Head of caudate nucleus (tissue), 42 donors: ENCODE measurements at regions of chr3 and their contacts with region 1.

Region 1: GRCh38 chr3:142595951-142596725 is at the start of gene PLS1:
- DNase-seq: peak; percentile 45 to 91 (median 82)

Region 2: DNA sequence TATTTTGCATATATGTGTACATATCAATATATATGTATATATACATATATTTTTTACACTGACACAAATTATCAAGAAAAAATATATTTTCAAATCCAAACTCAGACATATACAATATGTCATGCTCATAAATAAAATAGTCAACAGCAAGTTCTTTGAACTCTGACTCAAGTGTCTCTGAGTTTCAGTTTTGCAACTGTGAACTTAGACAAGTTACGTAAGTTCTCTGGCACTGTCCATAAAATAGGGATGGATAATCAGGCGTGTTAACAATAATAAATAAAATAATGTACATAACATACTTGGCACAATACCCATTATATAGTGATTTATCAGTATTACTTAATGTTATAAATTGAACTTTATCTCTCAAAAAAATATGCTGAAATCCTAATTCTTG is 136.2 kb before region 1 on chr3:
- intact Hi-C with region 1: no loop called
- DNase-seq: no peak

Region 3: GRCh38 chr3:142578327-142579223 is 17.6 kb before region 1 on chr3 and contains the start of gene ATR:
- intact Hi-C with region 1: loop called (anchors 2 kb)
- DNase-seq: peak; percentile 93 to 99 (median 97)

Region 4: GRCh38 chr3:142723968-142724681 is 128.0 kb after region 1 on chr3 and contains the start of gene TRPC1:
- intact Hi-C with region 1: loop called (anchors 10 kb)
- DNase-seq: peak; percentile 71 to 95 (median 84)